CD4-positive, alpha-beta T cell (primary cell): ENCODE measurements at regions of chr16 and their contacts with region 1.

Region 1: GRCh38 chr16:29757950-29758466 is 12.2 kb upstream of the C16orf54 start:
- DNase-seq: no peak
- ATAC-seq: no peak
- H3K4me3 ChIP-seq: no peak overlapping the region
- H3K4me3 Mint-ChIP-seq: no peak overlapping the region
- H3K27ac ChIP-seq: no peak overlapping the region
- H3K27ac Mint-ChIP-seq: peak overlapping the region; percentile 80
- H3K4me1 ChIP-seq: peaks cover 49% of the 10 kb centered on the region
- H3K4me1 Mint-ChIP-seq: peaks cover 47% of the 10 kb centered on the region
- H3K27me3 ChIP-seq: no peaks in the 10 kb centered on the region
- H3K27me3 Mint-ChIP-seq: no peaks in the 10 kb centered on the region
- CTCF ChIP-seq: no peak

Region 2: DNA sequence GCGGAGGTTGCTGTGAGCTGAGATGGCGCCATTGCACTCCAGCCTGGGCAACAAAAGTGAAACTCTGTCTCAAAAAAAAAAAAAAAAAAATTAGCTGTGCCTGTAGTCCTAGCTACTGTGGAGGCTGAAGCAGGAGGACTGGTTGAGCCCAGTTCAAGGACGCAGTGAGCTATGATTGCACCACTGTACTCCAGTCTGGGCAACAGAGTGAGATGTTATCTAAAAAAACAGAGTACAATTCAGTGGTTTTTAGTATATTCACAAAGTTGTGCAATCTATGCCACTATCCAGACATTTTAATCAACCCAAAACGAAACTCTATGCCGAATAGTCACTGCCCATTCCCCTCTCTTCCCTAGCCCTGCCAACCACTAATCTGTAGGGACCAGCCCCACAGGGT is 37.3 kb before region 1 on chr16:
- CTCF ChIA-PET with region 1: interaction called, 3 read pairs
- POLR2A ChIA-PET with region 1: no interaction called
- intact Hi-C with region 1: loop called in 1 of 2 experiments (anchors 5 kb)
- DNase-seq: no peak
- ATAC-seq: no peak
- H3K4me3 ChIP-seq: no peak overlapping the region
- H3K4me3 Mint-ChIP-seq: no peak overlapping the region
- H3K27ac ChIP-seq: no peak overlapping the region
- H3K27ac Mint-ChIP-seq: no peak overlapping the region
- H3K4me1 ChIP-seq: peaks cover 3% of the 10 kb centered on the region
- H3K4me1 Mint-ChIP-seq: peaks cover 21% of the 10 kb centered on the region
- H3K27me3 ChIP-seq: no peaks in the 10 kb centered on the region
- H3K27me3 Mint-ChIP-seq: no peaks in the 10 kb centered on the region
- CTCF ChIP-seq: no peak